ENCODE measurements at regions of chr11 and their contacts with region 1.

Region 1: GRCh38 chr11:123020968-123021367 is 39.3 kb upstream of the BSX start:
- DNase-seq: peak; percentile 77
- CTCF ChIP-seq: peak; percentile 71

Region 2: GRCh38 chr11:122869622-122870021 is 151.3 kb before region 1 on chr11:
- CTCF ChIA-PET with region 1: interaction called, 257 read pairs
- POLR2A ChIA-PET with region 1: no interaction called
- DNase-seq: no peak
- CTCF ChIP-seq: no peak

Region 3: DNA sequence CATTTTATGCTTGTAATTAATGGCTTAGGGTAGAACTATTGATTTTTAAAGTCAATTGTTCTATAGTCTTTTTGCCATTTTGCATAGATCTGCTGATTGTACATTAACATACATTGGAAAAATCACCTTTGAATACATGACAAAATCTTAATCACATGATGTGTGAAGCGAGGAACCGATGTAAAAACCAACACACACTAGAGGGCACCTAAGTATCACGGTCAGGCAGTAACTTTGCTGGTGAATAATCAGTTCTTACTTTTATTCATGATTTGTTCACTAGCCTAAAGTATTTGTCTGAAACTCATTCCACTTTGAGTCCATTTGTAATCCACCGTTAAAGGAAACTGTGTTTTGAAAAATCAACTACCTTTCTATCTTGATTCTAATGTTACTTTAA is 110.2 kb before region 1 on chr11:
- CTCF ChIA-PET with region 1: interaction called, 13 read pairs
- POLR2A ChIA-PET with region 1: no interaction called
- DNase-seq: no peak
- CTCF ChIP-seq: peak; percentile 8

Region 4: GRCh38 chr11:123033895-123034294 is 12.9 kb after region 1 on chr11:
- CTCF ChIA-PET with region 1: interaction called, 17 read pairs
- POLR2A ChIA-PET with region 1: interaction called, 7 read pairs
- DNase-seq: no peak
- CTCF ChIP-seq: no peak

Region 5: DNA sequence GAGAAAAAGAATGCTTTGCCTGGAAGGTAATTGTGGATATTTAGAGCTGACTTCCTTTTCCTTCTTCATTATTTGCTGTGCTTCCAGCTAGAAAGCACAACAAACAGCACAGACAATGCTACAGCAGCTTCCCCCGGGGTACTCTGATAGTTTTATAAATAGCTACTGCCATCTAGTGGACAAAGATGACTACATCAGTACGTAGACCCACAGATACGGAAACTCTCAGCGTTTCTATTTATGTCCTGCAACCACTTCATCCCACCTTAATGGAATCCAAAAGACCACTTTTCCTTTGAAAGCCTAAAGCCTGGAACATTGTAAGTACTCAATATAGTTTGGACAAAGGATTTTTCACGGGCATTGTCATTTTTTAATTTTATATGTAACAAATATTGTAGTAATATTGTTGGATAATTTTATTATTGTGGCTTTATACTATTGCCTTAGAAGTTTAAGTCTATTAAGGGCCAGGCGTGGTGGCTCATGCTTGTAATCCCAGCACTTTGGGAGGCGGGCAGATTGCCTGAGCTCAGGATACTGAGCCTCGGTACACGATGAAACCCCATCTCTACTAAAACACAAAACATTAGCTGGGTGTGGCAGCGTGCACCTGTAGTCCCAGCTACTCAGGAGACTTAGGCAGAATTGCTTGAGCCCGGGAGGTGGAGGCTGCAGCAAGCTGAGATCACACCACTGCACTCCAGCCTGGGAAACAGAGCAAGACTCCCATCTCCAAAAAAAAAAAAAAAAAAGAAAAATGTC is 33.5 kb after region 1 on chr11:
- CTCF ChIA-PET with region 1: interaction called, 50 read pairs
- POLR2A ChIA-PET with region 1: interaction called, 3 read pairs
- DNase-seq: peak; percentile 76
- CTCF ChIP-seq: peak; percentile 65

Region 6: GRCh38 chr11:123645286-123645975 is 624.5 kb after region 1 on chr11:
- CTCF ChIA-PET with region 1: no interaction called
- POLR2A ChIA-PET with region 1: no interaction called
- DNase-seq: no peak
- CTCF ChIP-seq: no peak